Left cardiac atrium (tissue), 4 donors: ENCODE measurements at regions of chr17 and their contacts with region 1.

Region 1: DNA sequence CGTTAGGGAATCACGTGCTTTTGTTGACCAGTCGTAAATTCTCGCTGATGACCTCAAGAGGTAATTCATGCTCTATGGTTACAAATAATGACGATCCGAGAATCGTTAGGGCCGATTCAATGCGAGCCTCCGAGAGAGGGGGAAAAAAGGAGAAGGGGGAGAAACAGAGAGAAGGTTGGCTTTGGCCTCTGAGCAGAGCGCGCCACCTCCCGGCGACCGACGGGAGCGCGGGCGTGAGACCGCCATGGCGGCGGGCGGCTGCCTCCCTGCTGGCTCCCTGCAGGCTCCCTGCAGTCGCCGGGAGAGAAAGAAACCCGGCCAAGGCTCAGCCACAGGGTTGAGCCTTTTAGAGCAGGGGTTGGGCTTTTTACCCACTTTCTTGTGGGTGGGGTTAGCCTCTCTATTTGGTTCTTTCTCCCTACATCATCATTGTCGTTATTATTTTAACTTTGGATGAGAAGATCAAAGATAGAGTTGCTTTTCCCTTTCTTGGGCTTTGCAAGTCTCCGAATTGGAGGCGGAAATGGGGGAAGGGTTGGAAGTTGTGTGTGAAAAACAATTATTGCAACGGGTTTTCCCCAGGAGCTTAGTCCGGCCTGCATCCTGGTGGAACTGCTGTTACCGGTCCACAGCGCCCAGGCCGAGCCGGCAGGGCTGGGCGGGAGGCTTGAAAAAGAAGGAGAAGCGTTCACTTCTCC is 410 bp upstream of the HOXB5 start:
- DNase-seq: peak; percentile 72
- ATAC-seq: peak; percentile 61 to 74

Region 2: DNA sequence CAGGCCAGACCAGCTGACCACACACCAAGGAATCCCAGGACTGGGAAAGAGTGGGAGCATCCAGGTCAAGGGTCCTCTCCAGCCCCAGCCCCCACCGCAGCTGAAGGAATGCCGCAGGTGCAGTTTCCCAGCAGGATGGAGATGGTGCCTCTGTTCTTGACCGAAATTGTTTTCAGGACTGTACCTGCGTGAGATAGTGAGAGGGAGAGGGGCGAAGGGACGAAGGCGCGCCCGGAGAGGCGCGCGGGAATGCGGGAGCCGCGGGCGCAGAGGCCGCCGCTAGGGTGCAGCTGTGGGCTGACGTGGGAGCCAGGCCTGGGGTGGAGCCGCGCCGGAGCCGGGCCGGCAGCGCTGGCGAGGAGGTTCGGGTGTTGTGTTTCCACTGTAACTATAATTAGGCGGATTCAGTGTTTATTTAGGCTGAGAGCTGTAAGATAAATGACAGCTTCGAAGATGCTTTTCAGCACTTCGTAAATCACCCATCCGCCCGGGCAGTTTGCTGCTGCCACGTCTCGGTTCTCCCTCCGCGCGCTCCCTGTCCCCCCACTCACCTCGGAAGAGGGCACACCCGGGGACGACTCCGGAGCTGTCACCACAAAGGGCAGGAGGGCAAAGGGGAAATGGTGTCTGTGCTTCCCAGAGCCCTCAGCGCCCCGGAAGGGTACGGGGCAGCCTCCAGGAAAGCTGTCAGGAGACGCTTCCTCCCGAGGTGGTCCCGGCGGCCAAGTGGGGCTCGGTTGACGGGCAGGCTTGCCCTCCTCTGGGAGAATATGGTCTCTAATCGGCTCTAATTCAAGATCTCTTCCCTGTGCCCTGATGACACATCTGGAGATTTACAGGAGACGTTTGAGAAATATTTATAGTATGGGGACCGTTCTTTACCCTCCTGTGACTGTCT is 101.3 kb before region 1 on chr17:
- intact Hi-C with region 1: loop called in 1 of 2 experiments (anchors 5 kb)
- DNase-seq: peak; percentile 70
- ATAC-seq: peak; percentile 97

Region 3: GRCh38 chr17:48561884-48562810 is 31.8 kb before region 1 on chr17:
- intact Hi-C with region 1: no loop called
- DNase-seq: no peak
- ATAC-seq: no peak